Activated B cell treated with CpG ODN at 0.5 μM for 24 hours (primary cell): ENCODE measurements at regions of chr2 and their contacts with region 1.

Region 1: DNA sequence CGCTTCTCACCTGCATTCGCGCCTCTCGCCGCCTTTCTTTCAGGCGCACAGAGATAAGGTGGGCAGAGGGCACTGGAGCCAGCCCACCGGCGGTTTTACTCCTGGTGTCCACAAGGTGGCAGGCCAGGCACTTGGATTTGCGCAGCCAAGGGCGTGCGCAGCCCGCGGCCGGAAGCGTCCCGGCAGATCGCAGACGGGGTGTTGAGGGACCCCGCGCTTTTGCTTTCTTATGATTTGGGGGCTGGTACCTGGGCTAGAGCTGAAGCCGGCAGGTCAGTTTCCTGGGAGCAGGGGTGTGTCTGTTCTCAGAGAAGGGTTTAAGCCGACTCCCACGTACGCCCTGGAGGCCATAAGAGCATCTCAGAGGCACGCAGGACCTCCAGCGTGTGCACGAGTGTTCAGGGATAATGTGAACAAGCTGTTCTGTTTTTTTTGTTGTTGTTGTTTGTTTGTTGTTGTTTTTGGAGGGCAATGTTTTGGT is 305.6 kb upstream of the CXCR4 start:
- DNase-seq: peak; percentile 70
- ATAC-seq: peak; percentile 99
- H3K4me3 Mint-ChIP-seq: peak overlapping the region; percentile 88
- H3K27ac Mint-ChIP-seq: peak overlapping the region; percentile 2
- H3K4me1 Mint-ChIP-seq: peaks cover 12% of the 10 kb centered on the region
- H3K27me3 Mint-ChIP-seq: peaks cover 23% of the 10 kb centered on the region
- CTCF ChIP-seq: no peak

Region 2: DNA sequence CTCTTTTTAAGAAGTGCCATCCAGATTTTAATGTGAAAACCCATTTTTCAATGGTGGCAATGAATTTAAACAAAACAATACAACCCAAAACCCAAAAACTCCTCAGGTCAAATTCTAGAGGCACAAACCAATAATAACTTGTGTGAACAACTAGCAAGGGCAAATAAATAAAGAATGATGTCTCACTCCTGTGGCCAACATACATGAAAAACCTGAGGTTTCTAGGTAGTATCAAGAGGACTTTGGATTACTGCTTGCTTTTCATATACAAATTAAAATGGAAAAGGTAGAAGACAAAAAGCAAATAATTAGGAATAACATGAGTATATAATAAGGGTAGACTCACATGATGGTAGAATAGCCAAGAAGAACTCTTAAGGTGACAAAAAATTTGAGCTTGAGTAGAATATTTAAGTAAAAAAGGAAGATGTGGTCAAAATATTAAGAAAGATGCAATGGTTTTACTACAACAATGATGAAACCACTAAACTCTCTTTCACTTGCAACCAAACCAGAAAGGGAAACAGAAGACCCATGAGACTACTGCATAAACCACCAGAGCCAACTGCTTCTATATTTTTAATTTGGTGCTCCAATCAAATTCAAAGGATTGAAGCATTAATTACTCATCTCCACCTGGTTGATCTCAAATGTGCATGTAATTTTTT is 491.6 kb before region 1 on chr2:
- CTCF ChIA-PET with region 1: no interaction called
- POLR2A ChIA-PET with region 1: no interaction called
- intact Hi-C with region 1: no loop called
- DNase-seq: no peak
- ATAC-seq: no peak
- H3K4me3 Mint-ChIP-seq: no peak overlapping the region
- H3K27ac Mint-ChIP-seq: peak overlapping the region; percentile 5
- H3K4me1 Mint-ChIP-seq: peaks cover 14% of the 10 kb centered on the region
- H3K27me3 Mint-ChIP-seq: no peaks in the 10 kb centered on the region
- CTCF ChIP-seq: no peak

Region 3: DNA sequence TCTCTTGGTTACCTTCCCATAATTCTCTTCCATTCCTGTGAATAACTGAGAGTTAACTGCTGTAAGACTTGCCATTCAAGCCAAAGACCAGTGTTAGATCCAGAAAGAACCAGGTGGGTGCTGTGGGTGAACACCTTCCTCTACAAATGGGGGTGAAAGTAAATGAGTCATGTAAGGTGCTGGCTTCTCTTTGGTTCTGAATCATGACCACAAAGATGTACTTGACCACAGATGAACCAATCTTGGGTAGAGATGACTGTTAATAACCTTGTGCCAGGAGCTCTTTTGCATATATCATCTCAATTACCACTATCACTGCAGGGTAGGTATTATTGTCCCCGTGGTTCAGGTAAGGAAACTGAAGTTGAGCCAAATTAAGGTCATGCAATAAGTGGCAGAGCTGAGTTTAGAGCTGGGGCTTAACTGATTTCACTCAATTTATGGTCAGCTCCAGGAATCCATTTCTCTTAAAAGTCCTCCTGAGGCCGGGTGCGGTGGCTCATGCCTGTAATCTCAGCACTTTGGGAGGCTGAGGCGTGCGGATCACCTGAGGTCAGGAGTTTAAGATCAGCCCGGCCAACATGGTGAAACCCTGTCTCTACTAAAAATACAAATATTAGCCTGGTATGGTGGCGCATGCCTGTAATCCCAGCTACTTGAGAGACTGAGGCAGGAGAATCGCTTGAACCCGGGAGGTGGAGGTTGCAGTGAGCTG is 60.7 kb before region 1 on chr2:
- CTCF ChIA-PET with region 1: no interaction called
- POLR2A ChIA-PET with region 1: no interaction called
- intact Hi-C with region 1: no loop called
- DNase-seq: no peak
- ATAC-seq: peak; percentile 92
- H3K4me3 Mint-ChIP-seq: no peak overlapping the region
- H3K27ac Mint-ChIP-seq: peak overlapping the region; percentile 2
- H3K4me1 Mint-ChIP-seq: peaks cover 23% of the 10 kb centered on the region
- H3K27me3 Mint-ChIP-seq: no peaks in the 10 kb centered on the region
- CTCF ChIP-seq: no peak

Region 4: GRCh38 chr2:136394136-136395060 is 29.2 kb before region 1 on chr2:
- CTCF ChIA-PET with region 1: no interaction called
- POLR2A ChIA-PET with region 1: no interaction called
- intact Hi-C with region 1: loop called (anchors 1 kb)
- DNase-seq: no peak
- ATAC-seq: peak; percentile 41
- H3K4me3 Mint-ChIP-seq: peak overlapping the region; percentile 11
- H3K27ac Mint-ChIP-seq: peak overlapping the region; percentile 69
- H3K4me1 Mint-ChIP-seq: peaks cover 63% of the 10 kb centered on the region
- H3K27me3 Mint-ChIP-seq: no peaks in the 10 kb centered on the region
- CTCF ChIP-seq: no peak

Region 5: GRCh38 chr2:136665736-136666135 is 242.2 kb after region 1 on chr2:
- CTCF ChIA-PET with region 1: no interaction called
- POLR2A ChIA-PET with region 1: no interaction called
- intact Hi-C with region 1: loop called (anchors 5 kb)
- DNase-seq: no peak
- ATAC-seq: no peak
- H3K4me3 Mint-ChIP-seq: no peak overlapping the region
- H3K27ac Mint-ChIP-seq: no peak overlapping the region
- H3K4me1 Mint-ChIP-seq: no peaks in the 10 kb centered on the region
- H3K27me3 Mint-ChIP-seq: no peaks in the 10 kb centered on the region
- CTCF ChIP-seq: no peak

Region 6: GRCh38 chr2:136738044-136738443 is 314.5 kb after region 1 on chr2:
- CTCF ChIA-PET with region 1: interaction called, 3 read pairs
- POLR2A ChIA-PET with region 1: no interaction called
- intact Hi-C with region 1: loop called (anchors 10 kb)
- DNase-seq: no peak
- ATAC-seq: no peak
- H3K4me3 Mint-ChIP-seq: no peak overlapping the region
- H3K27ac Mint-ChIP-seq: no peak overlapping the region
- H3K4me1 Mint-ChIP-seq: no peaks in the 10 kb centered on the region
- H3K27me3 Mint-ChIP-seq: peaks cover 13% of the 10 kb centered on the region
- CTCF ChIP-seq: no peak